Breast epithelium (tissue), 4 donors: ENCODE measurements at regions of chr14 and their contacts with region 1.

Region 1: GRCh38 chr14:69910871-69911270 is 31.7 kb downstream of the SMOC1 start:
- DNase-seq: no peak
- H3K4me3 ChIP-seq: no peak overlapping the region
- H3K27ac ChIP-seq: no peak overlapping the region
- H3K4me1 ChIP-seq: no peaks in the 10 kb centered on the region
- H3K27me3 ChIP-seq: no peaks in the 10 kb centered on the region
- CTCF ChIP-seq: no peak
- POLR2A ChIP-seq: no peak

Region 2: DNA sequence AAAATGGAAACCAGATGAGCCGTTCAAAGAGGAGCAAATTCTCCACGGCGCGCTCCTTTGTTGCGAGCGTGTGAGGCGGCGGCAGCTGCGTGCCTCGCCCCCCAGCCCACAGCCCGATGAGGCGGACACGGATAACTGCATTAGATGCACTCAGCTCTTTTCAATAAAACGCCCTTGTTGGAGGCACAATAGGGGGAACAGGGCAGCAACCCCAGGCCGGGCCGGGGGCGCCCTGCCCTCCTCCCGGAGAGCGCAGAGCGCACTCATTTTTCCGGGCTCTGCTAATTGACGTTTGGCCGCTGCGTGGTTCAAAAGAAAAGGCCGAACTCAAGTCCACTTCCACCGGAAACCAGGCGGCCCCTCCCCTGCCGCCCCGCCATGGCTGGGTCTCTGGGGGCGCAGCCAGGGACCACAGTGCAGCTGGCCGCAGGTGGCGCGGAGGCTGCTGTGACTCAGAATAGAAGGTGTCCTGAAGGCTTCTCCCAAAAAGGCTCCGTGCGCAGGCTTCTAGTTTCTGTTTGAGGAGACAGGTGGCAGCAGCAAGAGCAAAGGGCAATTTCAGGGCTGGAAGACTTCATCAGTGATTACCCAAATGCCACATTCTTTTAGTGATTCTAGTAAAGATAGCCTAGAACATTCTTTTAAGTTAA is 60.7 kb before region 1 on chr14:
- intact Hi-C with region 1: loop called (anchors 2 kb)
- DNase-seq: no peak
- H3K4me3 ChIP-seq: no peak overlapping the region
- H3K27ac ChIP-seq: no peak overlapping the region
- H3K4me1 ChIP-seq: no peaks in the 10 kb centered on the region
- H3K27me3 ChIP-seq: no peaks in the 10 kb centered on the region
- CTCF ChIP-seq: no peak
- POLR2A ChIP-seq: no peak

Region 3: GRCh38 chr14:69928111-69928523 is 17.2 kb after region 1 on chr14:
- intact Hi-C with region 1: no loop called
- DNase-seq: no peak
- H3K4me3 ChIP-seq: no peak overlapping the region
- H3K27ac ChIP-seq: no peak overlapping the region
- H3K4me1 ChIP-seq: no peaks in the 10 kb centered on the region
- H3K27me3 ChIP-seq: no peaks in the 10 kb centered on the region
- CTCF ChIP-seq: no peak
- POLR2A ChIP-seq: no peak